Dorsolateral prefrontal cortex (tissue), 120 donors: ENCODE measurements at regions of chr10 and their contacts with region 1.

Region 1: GRCh38 chr10:23031318-23031717 is 64.1 kb upstream of the MSRB2 start:
- DNase-seq: no peak
- H3K4me3 ChIP-seq: no peak overlapping the region
- H3K27ac ChIP-seq: no peak overlapping the region
- H3K27me3 ChIP-seq: no peaks in the 10 kb centered on the region
- CTCF ChIP-seq: no peak

Region 2: DNA sequence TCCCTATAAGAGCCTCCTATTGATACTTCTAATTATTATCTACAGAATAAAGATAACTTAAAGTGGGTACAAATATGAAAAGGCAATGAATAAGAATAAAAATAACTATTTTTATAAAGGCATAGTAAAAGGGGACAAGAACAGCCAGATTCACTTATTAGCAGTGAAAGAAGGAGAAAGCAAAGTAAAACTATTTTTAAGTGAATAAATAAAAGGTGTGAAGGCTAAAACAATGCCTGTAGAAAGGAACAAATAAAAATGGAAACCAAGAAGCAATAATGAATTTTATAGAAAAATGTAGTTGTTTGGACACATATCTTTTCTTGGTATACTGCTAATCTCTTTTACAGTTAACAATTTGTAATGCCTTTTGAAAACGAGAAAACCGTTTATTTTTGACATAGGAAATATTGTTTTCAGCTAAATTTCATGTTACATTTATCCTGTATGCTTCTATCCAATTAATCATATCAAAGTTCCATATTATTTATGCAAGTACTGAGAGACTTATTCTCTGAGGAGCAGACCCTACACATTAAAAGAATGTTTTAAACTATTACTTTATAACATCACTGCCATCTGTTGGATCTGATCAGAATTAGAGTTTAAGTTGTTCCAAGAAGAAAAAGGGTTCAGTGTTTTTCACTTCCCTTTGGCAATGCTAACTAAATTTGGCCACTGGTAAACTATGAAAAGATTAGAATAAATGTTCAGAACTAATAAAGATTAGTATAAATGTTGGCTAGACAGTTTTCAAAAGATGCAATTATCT is 44.4 kb before region 1 on chr10:
- intact Hi-C with region 1: no loop called
- DNase-seq: no peak
- H3K4me3 ChIP-seq: no peak overlapping the region
- H3K27ac ChIP-seq: peak overlapping the region in 54 of 59 donors; percentile 1 to 88 (median 66)
- H3K27me3 ChIP-seq: no peaks in the 10 kb centered on the region
- CTCF ChIP-seq: peak; percentile 45 to 85 (median 68)

Region 3: DNA sequence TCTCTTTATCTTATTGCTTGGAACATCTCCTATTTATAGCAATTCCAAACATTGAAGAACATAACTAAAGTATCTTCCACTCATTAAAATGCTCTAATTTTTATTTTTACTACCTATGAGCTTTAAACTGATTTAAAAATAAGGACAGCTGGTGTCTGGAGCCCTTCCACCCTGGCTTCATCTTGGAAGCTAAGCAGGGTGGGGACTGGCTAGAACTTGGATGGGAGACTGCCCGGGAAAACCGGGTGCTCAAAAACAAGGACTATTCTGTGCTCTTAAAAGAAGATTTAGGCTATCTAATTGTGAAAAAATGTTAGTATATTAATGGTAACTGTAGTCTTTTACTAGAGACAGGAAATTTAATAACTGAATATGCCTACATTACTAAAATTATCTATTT is 34.2 kb before region 1 on chr10:
- intact Hi-C with region 1: loop called in 1 of 2 experiments (anchors 5 kb)
- DNase-seq: peak in 1 of 10 donors; percentile 24
- H3K4me3 ChIP-seq: no peak overlapping the region
- H3K27ac ChIP-seq: peak overlapping the region in 17 of 59 donors; percentile 1 to 63 (median 42)
- H3K27me3 ChIP-seq: no peaks in the 10 kb centered on the region
- CTCF ChIP-seq: peak in 1 of 56 donors; percentile 22